ENCODE measurements at regions of chrX and their contacts with region 1.

Region 1: GRCh38 chrX:40108959-40109287 is 11.2 kb upstream of the BCOR start:
- DNase-seq: peak; percentile 80 to 91 (median 86)
- ATAC-seq: peak; percentile 58 to 76 (median 68)
- H3K4me3 ChIP-seq: peak overlapping the region; percentile 31 to 55 (median 42)
- H3K27ac ChIP-seq: peak overlapping the region; percentile 84 to 92 (median 88)
- H3K4me1 ChIP-seq: peaks cover 0 to 22% (median 13%) of the 10 kb centered on the region in 3 donors
- H3K27me3 ChIP-seq: peaks cover 0 to 10% (median 2%) of the 10 kb centered on the region in 4 donors
- CTCF ChIP-seq: no peak

Region 2: GRCh38 chrX:39605178-39605577 is 503.7 kb before region 1 on chrX:
- intact Hi-C with region 1: no loop called
- DNase-seq: no peak
- ATAC-seq: no peak
- H3K4me3 ChIP-seq: no peak overlapping the region
- H3K27ac ChIP-seq: no peak overlapping the region
- H3K4me1 ChIP-seq: no peaks in the 10 kb centered on the region
- H3K27me3 ChIP-seq: peaks cover 0 to 13% (median 2%) of the 10 kb centered on the region in 4 donors
- CTCF ChIP-seq: no peak

Region 3: DNA sequence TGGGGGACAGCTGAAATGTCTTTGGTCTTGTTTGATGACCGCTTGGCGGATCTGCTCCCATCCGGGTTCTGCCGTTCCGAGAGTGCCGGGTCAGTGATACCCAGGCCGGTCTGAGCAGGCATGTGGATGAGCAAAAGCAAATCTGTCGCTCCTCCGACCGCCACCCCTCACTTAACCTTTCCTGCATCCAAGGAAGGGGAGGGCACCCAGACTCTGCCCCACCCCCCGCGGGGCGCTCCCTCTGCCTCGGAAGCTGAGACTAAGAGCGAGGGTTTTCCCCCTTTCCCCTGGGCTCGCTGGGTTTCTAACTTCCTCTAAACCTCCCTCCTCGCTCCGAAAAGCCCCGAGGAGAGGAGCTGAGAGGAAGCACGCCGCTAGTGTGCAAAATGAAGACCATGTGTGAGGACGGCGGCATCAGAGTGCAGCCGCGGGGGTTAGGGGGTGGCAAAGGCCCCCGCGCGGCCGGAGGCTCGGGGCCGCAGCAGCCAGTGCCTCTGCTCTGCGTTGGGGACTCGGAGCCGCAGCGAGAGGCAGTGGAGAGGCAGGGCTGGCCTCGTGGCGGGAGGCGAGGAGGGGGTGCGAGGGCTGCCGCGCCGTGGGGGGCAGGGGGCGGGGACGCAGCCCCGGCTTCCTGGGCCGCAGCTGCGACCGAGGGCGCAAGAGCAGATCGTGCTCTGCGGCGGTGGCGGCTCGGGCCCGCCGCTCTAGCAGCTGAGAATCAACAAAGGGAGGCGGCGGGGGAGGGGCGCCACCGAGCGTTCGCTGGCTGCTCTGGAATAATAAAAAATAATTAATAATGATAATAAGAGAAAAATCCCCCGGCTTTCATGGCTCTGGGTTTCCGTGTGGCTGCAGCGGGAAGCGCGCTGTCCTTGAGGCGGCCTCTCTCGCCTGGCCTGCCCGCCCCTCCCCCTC is 44.7 kb after region 1 on chrX:
- intact Hi-C with region 1: loop called in 1 of 3 experiments (anchors 10 kb)
- DNase-seq: peak in 5 of 6 donors; percentile 51 to 78 (median 71)
- ATAC-seq: peak; percentile 36 to 56 (median 40)
- H3K4me3 ChIP-seq: peak overlapping the region; percentile 15 to 47 (median 31)
- H3K27ac ChIP-seq: peak overlapping the region; percentile 65 to 73 (median 68)
- H3K4me1 ChIP-seq: peaks cover 0 to 3% (median 0%) of the 10 kb centered on the region in 3 donors
- H3K27me3 ChIP-seq: peaks cover 0 to 4% (median 1%) of the 10 kb centered on the region in 4 donors
- CTCF ChIP-seq: no peak

Region 4: DNA sequence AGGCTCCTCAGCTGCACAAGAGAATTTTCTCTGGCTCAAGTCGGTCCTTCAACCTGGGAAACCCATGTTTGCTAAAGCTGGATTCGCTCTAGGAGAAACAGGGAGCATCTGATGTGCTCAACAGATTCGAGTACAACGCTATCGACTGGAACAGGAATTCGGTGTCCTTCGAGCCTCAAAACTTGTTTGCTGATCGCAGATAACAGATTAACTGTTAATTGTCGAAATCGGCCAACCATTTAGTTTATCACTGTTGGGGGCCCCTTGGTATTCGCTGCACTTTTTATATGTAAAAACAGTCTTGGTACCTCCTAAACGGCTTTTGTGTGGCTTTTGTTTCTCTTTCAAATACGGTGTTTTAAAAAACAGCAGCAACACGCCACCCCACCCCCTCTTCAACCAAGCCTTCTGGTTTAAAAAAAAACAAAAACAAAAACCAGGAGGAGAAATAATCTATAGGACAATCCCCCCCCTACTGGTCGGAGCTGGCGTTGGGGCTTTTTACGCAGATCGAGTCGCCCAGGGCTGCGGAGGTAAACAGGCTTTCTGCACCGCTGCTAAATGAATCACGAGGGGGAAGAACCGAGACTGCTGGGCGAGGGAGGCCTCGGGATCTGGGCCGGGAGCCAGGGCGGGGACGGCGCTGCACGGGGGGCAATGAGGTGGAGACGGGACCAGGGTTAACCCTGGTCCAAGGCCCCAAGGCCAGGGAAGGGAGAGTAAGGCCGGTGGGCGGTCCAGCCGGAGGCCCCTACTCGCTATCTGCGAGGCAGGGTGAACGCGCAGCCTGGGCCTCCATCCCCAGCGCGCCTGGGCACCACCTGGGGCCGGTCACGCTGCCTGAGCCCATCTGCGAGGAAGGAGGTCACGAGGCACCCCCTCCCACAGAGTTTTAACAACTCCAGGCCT is 60.5 kb after region 1 on chrX:
- intact Hi-C with region 1: loop called in 1 of 3 experiments (anchors 10 kb)
- DNase-seq: peak in 4 of 6 donors; percentile 38 to 66 (median 42)
- ATAC-seq: peak in 3 of 4 donors; percentile 32 to 55 (median 36)
- H3K4me3 ChIP-seq: no peak overlapping the region
- H3K27ac ChIP-seq: no peak overlapping the region
- H3K4me1 ChIP-seq: peaks cover 0 to 5% (median 0%) of the 10 kb centered on the region in 3 donors
- H3K27me3 ChIP-seq: peaks cover 0 to 16% (median 1%) of the 10 kb centered on the region in 4 donors
- CTCF ChIP-seq: no peak

Region 5: DNA sequence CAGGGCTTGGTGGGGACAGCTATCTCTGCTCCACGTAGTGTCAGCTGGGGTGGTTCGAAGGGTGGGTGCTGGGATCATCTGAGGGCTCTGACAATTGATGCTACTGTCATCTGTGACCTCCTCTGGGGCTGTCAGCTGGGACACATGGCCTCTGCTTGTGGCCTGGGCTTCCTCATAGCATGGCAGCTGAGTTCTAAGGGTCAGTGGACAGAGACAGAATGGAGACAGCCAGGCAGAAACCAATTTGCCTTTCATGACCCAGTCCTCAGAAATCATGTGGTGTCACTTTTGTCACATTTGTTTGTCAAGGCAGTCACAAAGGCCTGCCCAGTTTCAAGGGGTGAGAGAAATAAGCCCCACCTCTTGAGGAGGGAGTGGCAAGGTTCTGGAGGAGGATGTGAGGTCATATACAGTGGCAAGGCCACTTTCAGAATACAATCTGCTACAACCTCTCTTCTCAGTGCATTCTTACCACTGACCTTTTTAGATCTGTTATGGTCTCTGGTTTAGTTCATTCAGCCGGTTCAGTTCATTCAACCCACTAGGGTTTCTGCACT is 92.5 kb after region 1 on chrX:
- intact Hi-C with region 1: no loop called
- DNase-seq: no peak
- ATAC-seq: no peak
- H3K4me3 ChIP-seq: no peak overlapping the region
- H3K27ac ChIP-seq: no peak overlapping the region
- H3K4me1 ChIP-seq: no peaks in the 10 kb centered on the region
- H3K27me3 ChIP-seq: no peaks in the 10 kb centered on the region
- CTCF ChIP-seq: no peak

Region 6: DNA sequence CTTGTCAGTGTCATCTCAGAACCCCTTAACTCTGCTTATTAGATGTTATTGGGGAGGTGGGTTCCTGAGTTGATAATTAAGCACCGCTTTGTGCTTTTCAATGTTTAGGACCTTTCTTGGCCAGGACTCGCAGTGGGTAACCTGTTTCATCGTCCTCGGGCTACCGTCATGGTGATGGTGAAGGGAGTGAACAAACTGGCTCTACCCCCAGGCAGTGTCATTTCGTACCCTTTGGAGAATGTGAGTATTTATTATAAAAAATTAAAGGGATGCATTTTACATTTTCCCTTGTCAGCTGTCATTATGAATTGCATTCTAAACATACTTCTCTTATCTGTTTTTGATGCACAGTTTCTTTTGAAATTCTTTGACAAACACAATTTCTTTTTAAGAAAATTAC is 482.2 kb after region 1 on chrX:
- intact Hi-C with region 1: no loop called
- DNase-seq: no peak
- ATAC-seq: no peak
- H3K4me3 ChIP-seq: no peak overlapping the region
- H3K27ac ChIP-seq: no peak overlapping the region
- H3K4me1 ChIP-seq: no peaks in the 10 kb centered on the region
- H3K27me3 ChIP-seq: peaks cover 0 to 25% (median 0%) of the 10 kb centered on the region in 4 donors
- CTCF ChIP-seq: no peak

Measured in pancreas (tissue), 10 donors.